WTC11 (cell line): ENCODE measurements at regions of chr15 and their contacts with region 1.

Region 1: DNA sequence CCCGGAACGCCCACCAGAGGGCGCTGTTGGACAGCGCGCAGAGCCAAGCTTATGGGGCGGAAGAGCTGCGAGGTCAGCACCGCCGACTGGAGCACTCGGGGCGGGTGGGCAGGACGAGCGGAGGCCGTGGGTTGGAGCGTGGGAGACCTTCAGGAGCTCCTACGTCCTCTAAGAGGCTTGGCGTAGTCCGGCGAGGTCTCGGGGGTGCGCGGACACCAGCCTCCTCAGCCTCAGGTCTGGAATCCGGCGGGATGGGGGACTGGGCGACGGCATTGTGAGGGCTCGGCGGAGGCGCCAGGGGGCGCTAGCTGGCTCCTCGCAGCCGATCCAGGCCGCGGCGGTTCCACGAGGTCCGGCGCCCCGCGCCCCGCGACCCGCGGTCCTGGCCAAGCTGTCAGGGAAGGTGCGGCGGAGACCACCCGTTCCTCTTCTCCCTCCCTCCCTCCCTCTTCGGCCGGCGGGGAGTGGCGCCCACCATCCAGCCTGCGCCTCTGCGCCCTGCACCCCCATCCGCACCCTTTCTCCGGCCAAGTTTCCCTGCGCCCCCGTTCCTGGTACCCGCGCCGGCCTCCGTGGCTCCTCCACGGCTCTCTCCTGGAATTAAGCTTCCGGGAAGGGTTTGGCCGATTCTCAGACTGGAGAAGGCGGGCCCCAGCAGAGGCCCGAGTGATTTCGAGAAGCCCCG is 24.3 kb upstream of the POLG start:
- DNase-seq: peak; percentile 74
- ATAC-seq: peak; percentile 50
- H3K4me3 Mint-ChIP-seq: peak overlapping the region; percentile 64
- H3K27ac Mint-ChIP-seq: no peak overlapping the region
- H3K4me1 Mint-ChIP-seq: peaks cover 24% of the 10 kb centered on the region
- H3K27me3 Mint-ChIP-seq: peaks cover 96% of the 10 kb centered on the region
- CTCF ChIP-seq: peak; percentile 99

Region 2: DNA sequence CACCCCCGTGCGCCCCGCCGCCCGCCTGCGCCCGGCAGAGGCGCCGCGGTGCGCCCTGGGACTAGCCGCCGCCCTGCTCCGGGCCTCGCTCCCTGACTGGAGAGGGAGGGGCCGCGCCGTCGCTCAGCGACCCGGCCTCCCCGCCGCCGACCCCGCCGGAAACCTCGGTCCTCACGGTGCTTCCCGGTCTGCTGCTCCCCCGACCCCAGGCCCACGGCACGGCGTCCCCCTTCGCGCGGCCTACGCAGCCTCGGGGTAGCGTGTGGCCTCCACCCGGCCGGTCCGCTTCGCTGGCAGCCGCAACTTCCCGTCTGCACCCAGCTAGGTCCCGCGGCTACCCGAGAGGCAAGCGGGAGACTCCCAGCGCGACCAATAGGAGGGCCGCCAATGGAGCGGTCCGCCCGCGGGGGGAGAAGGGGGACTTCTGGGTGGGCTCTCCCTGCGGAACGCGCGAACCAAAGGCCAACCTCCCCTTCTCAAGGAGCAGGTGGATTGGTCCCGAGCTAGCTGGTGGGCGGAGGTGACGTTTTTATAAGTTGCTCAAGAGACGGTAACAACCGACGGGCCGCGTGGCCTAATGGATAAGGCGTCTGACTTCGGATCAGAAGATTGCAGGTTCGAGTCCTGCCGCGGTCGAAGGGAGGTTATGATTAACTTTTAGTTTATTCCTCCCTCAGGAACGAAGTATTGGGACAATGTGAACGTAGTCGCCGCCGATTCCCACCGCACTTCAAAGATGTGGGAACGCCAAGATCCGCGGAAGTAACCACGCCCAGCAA is 24.2 kb before region 1 on chr15 and contains the start of gene POLG:
- CTCF ChIA-PET with region 1: interaction called, 34 read pairs
- POLR2A ChIA-PET with region 1: no interaction called
- DNase-seq: peak; percentile 99
- ATAC-seq: peak; percentile 87
- H3K4me3 Mint-ChIP-seq: peak within 1 kb of the TSS; percentile 95
- H3K27ac Mint-ChIP-seq: peak within 1 kb of the TSS; percentile 76
- H3K4me1 Mint-ChIP-seq: peaks cover 18% of the 10 kb centered on the region
- H3K27me3 Mint-ChIP-seq: peaks cover 7% of the 10 kb centered on the region; the same call in 1 of the 2 replicates
- CTCF ChIP-seq: no peak
- total RNA-seq, gene POLG: 63.9 to 76.2 TPM (median 68.3 TPM) in 3 replicates

Region 3: DNA sequence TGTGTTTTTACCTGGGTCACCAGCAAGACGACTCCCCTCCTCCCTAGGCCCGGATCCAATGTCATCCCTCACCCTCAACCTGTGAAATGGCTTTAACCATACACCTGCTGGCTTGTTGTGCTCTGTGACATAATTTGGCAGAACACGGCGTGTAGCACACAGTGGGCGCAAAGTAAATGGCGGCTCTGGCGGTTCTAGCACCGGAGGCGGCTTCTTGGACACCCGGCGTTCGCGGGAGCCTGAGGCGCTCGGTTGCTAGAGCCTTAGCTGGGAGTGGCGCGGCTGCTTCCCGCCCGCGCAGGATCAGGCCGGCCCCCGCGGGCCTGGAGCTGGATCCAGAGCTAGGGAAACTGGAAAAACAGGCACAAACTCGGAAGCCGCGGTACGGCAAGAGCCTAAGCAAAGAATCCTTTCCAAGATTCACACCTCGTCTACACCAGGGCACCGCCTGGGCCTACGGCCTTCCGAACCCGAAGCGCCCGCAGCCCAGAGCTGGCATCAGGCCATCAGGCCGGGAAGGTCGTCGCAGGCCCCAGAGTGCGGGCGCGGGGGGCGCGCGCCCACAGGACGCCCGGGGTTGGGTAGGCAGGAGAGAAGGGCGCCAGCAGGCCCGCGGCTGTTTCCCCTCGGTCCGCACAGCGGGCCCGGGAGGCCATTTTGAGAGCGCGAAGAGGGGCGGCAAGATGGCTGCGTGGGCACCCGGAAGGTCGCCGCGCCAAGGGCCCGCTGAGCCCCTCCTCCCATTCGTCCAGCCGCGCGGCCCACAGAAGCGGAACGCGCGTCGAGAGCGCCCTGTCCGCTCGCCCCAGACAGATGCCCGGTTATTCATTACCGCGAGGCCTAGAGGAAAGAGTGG is 19.6 kb after region 1 on chr15:
- CTCF ChIA-PET with region 1: interaction called, 133 read pairs
- POLR2A ChIA-PET with region 1: interaction called, 3 read pairs
- DNase-seq: no peak
- ATAC-seq: peak; percentile 45
- H3K4me3 Mint-ChIP-seq: peak overlapping the region; percentile 62
- H3K27ac Mint-ChIP-seq: no peak overlapping the region
- H3K4me1 Mint-ChIP-seq: peaks cover 46% of the 10 kb centered on the region
- H3K27me3 Mint-ChIP-seq: peaks cover 100% of the 10 kb centered on the region
- CTCF ChIP-seq: no peak

Region 4: DNA sequence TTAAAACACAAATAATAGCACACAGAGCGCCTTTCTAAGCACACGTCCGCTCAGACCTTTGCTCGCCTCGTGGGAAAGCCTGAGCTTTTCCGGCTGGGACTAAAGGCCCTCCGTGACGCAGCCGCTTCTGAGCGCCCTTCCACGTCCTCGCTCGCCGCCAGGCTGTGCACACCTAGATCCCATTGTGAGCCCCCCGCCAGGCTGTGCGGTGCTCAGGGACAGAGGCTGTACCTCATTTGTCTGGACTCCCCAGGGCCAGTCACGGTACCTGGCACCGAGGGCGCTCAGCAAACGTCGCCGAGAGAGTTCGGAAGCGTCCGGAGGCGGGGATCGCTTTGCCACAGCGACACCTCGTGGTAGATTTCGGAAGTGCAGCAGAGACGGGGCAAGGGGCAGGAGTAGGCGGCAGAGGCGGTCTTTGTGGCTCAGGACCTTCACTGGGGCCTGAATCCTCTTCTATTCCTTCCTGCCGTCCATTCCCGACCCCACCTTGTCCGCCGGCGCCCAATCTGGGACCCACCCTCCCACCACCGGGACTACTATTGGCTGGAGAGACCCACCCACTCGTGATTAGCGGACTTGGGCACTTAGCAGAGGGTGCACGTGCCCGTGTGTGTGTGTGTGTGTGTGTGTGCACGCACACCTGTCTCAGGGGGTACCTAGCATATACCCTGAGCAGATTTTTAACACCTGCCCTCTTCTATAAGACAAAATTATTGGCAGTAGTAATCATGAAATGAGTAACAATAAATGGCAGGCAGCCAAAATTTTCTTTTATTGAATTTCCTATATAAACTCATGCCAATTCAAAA is 71.8 kb after region 1 on chr15:
- CTCF ChIA-PET with region 1: interaction called, 133 read pairs
- POLR2A ChIA-PET with region 1: no interaction called
- DNase-seq: peak; percentile 96
- ATAC-seq: peak; percentile 95
- H3K4me3 Mint-ChIP-seq: peak overlapping the region; percentile 72
- H3K27ac Mint-ChIP-seq: no peak overlapping the region
- H3K4me1 Mint-ChIP-seq: peaks cover 15% of the 10 kb centered on the region
- H3K27me3 Mint-ChIP-seq: peaks cover 32% of the 10 kb centered on the region
- CTCF ChIP-seq: peak; percentile 100

Region 5: DNA sequence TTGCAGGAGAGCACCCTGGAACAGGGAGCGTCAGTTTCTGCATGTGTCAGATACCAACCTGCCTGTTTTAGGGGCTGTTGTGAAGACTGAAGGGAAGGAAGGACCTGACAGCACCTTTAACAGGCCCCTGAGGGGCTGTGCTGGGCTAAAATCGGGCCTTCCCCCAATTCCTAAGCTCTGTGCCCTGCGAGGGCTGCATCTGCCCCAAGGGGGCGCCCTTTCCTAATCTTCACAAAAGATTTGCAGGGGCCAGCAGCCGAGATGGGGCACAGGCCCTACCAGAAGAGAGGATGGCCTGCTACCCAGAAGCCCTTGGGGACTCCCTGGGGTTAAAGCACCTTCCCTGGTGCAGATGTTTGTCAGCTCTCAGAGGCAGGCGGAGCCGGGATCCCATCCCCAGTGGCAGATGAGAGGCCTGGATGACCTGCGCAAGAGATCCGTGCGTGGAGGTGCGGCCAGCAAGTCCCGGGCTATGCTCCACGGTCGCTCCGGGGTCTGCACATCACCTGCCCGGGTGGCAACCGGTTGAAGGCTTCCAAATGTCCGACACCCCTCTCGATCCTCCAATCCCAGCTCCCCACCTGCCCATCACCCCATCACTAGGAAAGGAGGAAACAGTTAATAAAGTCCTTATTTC is 83.9 kb after region 1 on chr15:
- CTCF ChIA-PET with region 1: interaction called, 142 read pairs
- POLR2A ChIA-PET with region 1: no interaction called
- DNase-seq: peak; percentile 94
- ATAC-seq: peak; percentile 82
- H3K4me3 Mint-ChIP-seq: no peak overlapping the region
- H3K27ac Mint-ChIP-seq: no peak overlapping the region
- H3K4me1 Mint-ChIP-seq: peaks cover 29% of the 10 kb centered on the region
- H3K27me3 Mint-ChIP-seq: peaks cover 26% of the 10 kb centered on the region
- CTCF ChIP-seq: peak; percentile 91

Region 6: DNA sequence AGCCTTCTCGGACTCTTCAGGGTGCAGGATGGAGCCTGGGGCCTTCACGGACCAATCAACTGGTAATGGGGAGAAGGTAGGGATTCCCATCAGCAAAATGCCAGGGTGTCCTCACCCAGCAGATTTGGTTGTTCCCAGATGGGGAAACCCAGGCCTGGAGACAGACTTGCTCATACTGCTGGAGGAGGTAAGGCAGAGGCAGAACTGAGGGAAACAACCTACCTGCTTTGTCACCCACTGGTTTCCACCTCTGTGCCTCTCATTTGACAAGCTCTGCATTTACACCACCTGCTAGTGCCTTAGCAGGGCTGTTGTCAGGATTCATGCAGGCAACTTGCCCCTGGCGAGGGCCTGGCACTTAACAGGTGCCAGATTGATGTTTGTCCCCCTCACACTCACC is 121.6 kb after region 1 on chr15:
- CTCF ChIA-PET with region 1: interaction called, 13 read pairs
- POLR2A ChIA-PET with region 1: no interaction called
- DNase-seq: no peak
- ATAC-seq: no peak
- H3K4me3 Mint-ChIP-seq: no peak overlapping the region
- H3K27ac Mint-ChIP-seq: no peak overlapping the region
- H3K4me1 Mint-ChIP-seq: no peaks in the 10 kb centered on the region
- H3K27me3 Mint-ChIP-seq: peaks cover 19% of the 10 kb centered on the region
- CTCF ChIP-seq: no peak

Region 7: GRCh38 chr15:89575146-89575655 is 216.3 kb after region 1 on chr15 and contains the start of gene TICRR:
- CTCF ChIA-PET with region 1: interaction called, 13 read pairs
- POLR2A ChIA-PET with region 1: no interaction called
- DNase-seq: peak; percentile 96
- ATAC-seq: peak; percentile 94
- H3K4me3 Mint-ChIP-seq: peak within 1 kb of the TSS; percentile 96
- H3K27ac Mint-ChIP-seq: peak within 1 kb of the TSS; percentile 90
- H3K4me1 Mint-ChIP-seq: peaks cover 24% of the 10 kb centered on the region
- H3K27me3 Mint-ChIP-seq: no peaks in the 10 kb centered on the region
- CTCF ChIP-seq: no peak
- total RNA-seq, gene TICRR: 33.7 to 37.4 TPM (median 33.8 TPM) in 3 replicates